Colonic mucosa (tissue), 4 donors: ENCODE measurements at regions of chr13 and their contacts with region 1.

Region 1: GRCh38 chr13:113296842-113297369 is at the start of gene LAMP1:
- DNase-seq: peak; percentile 97
- H3K4me3 ChIP-seq: peak within 1 kb of the TSS; percentile 96
- H3K27ac ChIP-seq: peak within 1 kb of the TSS; percentile 70
- H3K4me1 ChIP-seq: peaks cover 3% of the 10 kb centered on the region
- H3K27me3 ChIP-seq: no peaks in the 10 kb centered on the region
- CTCF ChIP-seq: no peak
- total RNA-seq, gene LAMP1: 184 to 226 TPM

Region 2: GRCh38 chr13:113364311-113364889 is 67.5 kb after region 1 on chr13:
- intact Hi-C with region 1: loop called (anchors 2 kb)
- DNase-seq: peak; percentile 33
- H3K4me3 ChIP-seq: peak overlapping the region; percentile 28
- H3K27ac ChIP-seq: peak overlapping the region; percentile 32
- H3K4me1 ChIP-seq: no peaks in the 10 kb centered on the region
- H3K27me3 ChIP-seq: no peaks in the 10 kb centered on the region
- CTCF ChIP-seq: no peak